BJ (cell line): ENCODE measurements at regions of chr7 and their contacts with region 1.

Region 1: DNA sequence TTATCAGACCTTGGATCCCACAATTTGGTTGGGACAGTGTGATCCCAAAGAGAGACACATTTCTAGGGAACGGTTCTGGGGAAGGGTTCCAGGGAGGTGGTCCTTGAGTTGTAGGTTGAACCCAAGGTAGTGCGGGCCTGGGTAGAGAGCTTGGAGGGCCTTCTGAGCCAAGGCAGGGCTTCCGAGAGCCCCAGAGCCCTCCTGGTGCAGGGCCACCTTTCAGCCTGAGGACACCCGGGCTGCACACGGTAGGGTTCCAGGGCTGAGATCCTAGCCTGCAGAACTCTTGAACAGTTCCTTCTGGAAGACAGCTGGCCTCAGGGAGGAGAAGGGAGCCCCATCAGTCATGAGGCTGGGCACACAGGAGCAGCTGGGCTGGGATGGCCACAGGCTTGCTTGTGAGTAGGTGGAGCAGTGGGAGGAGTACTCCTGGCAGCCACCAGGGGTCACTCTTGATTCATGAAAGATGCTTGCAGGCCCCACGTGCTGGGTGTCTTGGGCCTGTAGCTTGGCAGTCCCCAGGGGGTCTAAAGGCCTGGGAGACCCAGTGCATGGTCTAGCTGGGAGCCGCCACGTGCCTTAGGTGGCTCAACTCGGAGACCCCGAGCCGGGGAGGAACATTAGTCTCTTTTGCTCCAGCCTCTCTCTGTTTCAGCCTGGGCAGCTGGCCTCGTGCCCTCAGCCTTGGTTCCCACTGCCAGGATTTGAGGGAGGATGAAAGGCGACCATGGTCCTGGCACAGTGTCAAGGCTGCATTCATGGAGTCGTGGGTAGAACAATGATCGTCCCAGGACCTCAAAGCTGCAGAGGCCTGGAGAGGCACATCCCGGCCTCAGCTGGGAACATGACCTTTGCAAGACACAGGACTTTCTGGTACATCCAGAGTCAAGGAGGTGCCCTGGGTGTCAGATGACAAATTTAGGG is 381.6 kb downstream of the TYW1 start:
- DNase-seq: no peak
- H3K4me3 ChIP-seq: no peak overlapping the region
- H3K27me3 ChIP-seq: no peaks in the 10 kb centered on the region
- CTCF ChIP-seq: peak; percentile 88

Region 2: DNA sequence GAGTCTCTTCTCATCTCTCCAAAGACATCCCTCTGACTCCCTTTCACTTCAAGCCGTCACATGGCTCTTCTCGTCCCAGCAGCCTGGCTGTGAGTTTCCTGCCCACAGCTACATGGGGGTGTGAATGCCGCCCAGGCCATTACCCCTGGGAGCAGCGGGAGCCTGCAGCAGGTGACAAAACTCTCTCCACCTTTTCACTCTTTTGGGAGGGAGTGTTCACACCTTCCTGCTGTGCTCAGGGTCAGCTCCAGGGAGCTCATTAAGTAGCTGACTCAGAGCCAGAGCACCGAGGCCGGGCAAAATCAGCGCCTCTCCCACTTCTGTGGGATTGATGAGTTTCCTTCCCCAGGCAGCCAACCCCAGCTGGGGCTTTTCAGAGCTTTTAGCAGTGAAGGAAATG is 110.3 kb before region 1 on chr7:
- CTCF ChIA-PET with region 1: no interaction called
- POLR2A ChIA-PET with region 1: no interaction called
- DNase-seq: no peak
- H3K4me3 ChIP-seq: no peak overlapping the region
- H3K27me3 ChIP-seq: no peaks in the 10 kb centered on the region
- CTCF ChIP-seq: no peak

Region 3: DNA sequence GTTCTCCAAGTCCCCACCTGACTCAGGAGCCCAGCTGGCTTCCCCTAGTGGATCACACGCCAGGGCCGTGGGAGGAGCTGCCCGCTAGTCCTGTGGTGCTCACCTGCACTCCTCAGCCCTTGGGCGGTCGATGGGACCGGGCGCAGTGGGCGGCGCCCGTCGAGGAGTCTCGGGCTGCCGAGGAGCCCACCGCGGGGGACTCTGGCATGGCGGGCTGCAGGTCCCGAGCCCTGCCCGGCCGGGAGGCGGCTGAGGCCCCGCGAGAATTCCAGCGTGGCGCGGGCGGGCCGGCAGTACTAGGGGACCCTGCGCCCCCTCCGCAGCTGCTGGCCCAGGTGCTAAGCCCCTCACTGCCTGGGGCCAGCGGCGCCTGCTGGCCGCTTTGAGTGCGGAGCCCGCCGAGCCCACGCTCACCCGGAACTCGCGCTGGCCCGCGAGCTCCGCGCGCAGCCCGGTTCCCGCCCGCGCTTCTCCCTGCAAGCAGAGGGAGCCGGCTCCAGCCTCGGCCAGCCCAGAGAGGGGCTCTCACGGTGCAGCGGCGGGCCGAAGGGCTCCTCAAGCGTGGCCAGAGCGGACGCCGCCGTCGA is 13.7 kb before region 1 on chr7:
- CTCF ChIA-PET with region 1: interaction called, 11 read pairs
- POLR2A ChIA-PET with region 1: no interaction called
- DNase-seq: no peak
- H3K4me3 ChIP-seq: no peak overlapping the region
- H3K27me3 ChIP-seq: no peaks in the 10 kb centered on the region
- CTCF ChIP-seq: no peak

Region 4: DNA sequence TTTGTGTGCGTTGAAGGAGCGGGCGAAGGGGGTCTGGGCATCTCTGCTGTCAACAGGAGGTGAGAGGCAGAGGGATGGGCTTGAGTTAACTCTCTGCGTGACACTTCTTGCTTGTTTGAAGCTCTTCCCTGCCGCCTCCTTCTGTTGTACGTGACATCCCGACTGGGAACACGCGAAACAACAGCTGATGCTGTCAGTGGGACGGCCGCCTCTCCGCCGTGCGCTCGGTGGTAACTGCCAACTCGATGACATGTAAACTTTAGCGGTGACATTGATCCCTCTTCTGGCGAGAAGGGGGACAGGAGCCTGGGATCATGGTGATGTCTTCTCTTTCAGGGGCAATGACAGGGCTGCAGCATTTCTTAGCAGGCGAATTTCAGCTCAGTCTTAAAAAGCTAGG is 13.0 kb after region 1 on chr7:
- CTCF ChIA-PET with region 1: interaction called, 41 read pairs
- POLR2A ChIA-PET with region 1: no interaction called
- DNase-seq: no peak
- H3K4me3 ChIP-seq: no peak overlapping the region
- H3K27me3 ChIP-seq: no peaks in the 10 kb centered on the region
- CTCF ChIP-seq: no peak